ENCODE measurements at regions of chr6 and their contacts with region 1.

Region 1: GRCh38 chr6:26025894-26026832 is 61.1 kb upstream of the HFE start:
- DNase-seq: peak; percentile 97
- ATAC-seq: peak; percentile 35
- H3K4me3 ChIP-seq: peak overlapping the region; percentile 58 to 99 (median 88)
- H3K4me3 Mint-ChIP-seq: peak overlapping the region; percentile 98
- H3K27ac ChIP-seq: peak overlapping the region; percentile 88 to 97
- H3K27ac Mint-ChIP-seq: peak overlapping the region; percentile 98
- H3K4me1 ChIP-seq: peaks cover 23 to 32% of the 10 kb centered on the region in 2 donors
- H3K4me1 Mint-ChIP-seq: peaks cover 49% of the 10 kb centered on the region
- H3K27me3 ChIP-seq: no peaks in the 10 kb centered on the region
- H3K27me3 Mint-ChIP-seq: no peaks in the 10 kb centered on the region
- CTCF ChIP-seq: peak; percentile 92

Region 2: DNA sequence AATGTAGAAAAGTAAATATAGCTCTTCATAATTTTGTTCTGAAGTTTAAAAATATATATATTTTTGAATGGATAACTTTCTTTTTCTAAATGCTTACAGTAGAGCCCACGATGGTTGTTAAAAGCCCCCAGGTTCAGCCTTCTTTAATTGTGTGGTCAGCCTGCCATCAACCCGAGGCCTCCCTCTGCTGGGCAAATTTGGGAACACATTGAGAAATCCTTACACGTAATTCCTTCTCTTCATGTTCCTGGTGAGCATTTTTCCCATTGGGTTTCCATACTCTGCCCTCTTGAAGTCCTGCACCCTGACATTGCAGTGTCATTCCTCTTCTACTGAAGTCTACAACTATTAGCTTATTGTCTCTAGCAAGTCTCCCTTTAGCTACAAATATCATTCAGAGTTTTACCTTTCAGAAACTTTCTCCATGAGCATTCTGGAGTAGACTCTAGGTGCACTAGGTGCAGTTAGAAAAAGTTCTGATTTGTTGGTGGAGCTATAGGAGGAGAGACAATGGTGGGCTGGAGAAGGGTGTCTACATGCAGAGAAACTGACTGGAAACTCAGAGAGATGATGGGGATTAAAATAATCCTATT is 23.0 kb before region 1 on chr6:
- CTCF ChIA-PET with region 1: interaction called, 71 read pairs
- POLR2A ChIA-PET with region 1: interaction called, 3 read pairs
- intact Hi-C with region 1: no loop called
- DNase-seq: peak; percentile 69
- ATAC-seq: peak; percentile 63
- H3K4me3 ChIP-seq: no peak overlapping the region
- H3K4me3 Mint-ChIP-seq: no peak overlapping the region
- H3K27ac ChIP-seq: no peak overlapping the region
- H3K27ac Mint-ChIP-seq: no peak overlapping the region
- H3K4me1 ChIP-seq: no peaks in the 10 kb centered on the region
- H3K4me1 Mint-ChIP-seq: peaks cover 7% of the 10 kb centered on the region
- H3K27me3 ChIP-seq: no peaks in the 10 kb centered on the region
- H3K27me3 Mint-ChIP-seq: no peaks in the 10 kb centered on the region
- CTCF ChIP-seq: peak; percentile 91

Region 3: DNA sequence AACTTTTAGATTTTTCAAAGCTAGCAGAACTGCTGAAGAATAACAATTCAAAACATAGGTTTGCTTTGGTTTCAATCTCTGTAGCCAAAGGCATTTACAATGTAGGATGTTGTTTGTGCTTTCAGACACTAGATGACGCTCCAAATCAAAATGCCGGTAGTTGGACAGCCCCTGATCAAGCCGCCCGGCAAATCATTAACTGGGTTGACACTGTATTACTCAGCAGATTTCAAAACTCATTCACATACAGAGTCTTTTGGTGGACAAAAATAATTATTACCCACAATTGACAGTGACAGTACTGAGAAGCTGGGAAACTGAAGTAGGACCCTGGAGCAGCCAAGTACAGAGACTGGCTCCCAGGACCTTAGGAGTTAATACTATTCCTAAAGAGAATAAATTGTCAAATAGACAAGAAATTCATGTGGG is 39.8 kb after region 1 on chr6:
- CTCF ChIA-PET with region 1: interaction called, 38 read pairs
- POLR2A ChIA-PET with region 1: interaction called, 3 read pairs
- intact Hi-C with region 1: no loop called
- DNase-seq: peak; percentile 83
- ATAC-seq: peak; percentile 88
- H3K4me3 ChIP-seq: no peak overlapping the region
- H3K4me3 Mint-ChIP-seq: no peak overlapping the region
- H3K27ac ChIP-seq: no peak overlapping the region
- H3K27ac Mint-ChIP-seq: no peak overlapping the region
- H3K4me1 ChIP-seq: peaks cover 0 to 4% of the 10 kb centered on the region in 2 donors
- H3K4me1 Mint-ChIP-seq: peaks cover 7% of the 10 kb centered on the region
- H3K27me3 ChIP-seq: peaks cover 0 to 2% (median 0%) of the 10 kb centered on the region in 4 experiments
- H3K27me3 Mint-ChIP-seq: no peaks in the 10 kb centered on the region
- CTCF ChIP-seq: peak; percentile 90

Region 4: GRCh38 chr6:26216356-26216885 is 190.3 kb after region 1 on chr6:
- CTCF ChIA-PET with region 1: no interaction called
- POLR2A ChIA-PET with region 1: interaction called, 11 read pairs
- intact Hi-C with region 1: no loop called
- DNase-seq: peak; percentile 96
- ATAC-seq: peak; percentile 80
- H3K4me3 ChIP-seq: peak overlapping the region; percentile 70 to 93 (median 74)
- H3K4me3 Mint-ChIP-seq: no peak overlapping the region
- H3K27ac ChIP-seq: peak overlapping the region; percentile 81 to 82
- H3K27ac Mint-ChIP-seq: no peak overlapping the region
- H3K4me1 ChIP-seq: peaks cover 15 to 26% of the 10 kb centered on the region in 2 donors
- H3K4me1 Mint-ChIP-seq: peaks cover 19% of the 10 kb centered on the region
- H3K27me3 ChIP-seq: no peaks in the 10 kb centered on the region
- H3K27me3 Mint-ChIP-seq: no peaks in the 10 kb centered on the region
- CTCF ChIP-seq: no peak

Region 5: DNA sequence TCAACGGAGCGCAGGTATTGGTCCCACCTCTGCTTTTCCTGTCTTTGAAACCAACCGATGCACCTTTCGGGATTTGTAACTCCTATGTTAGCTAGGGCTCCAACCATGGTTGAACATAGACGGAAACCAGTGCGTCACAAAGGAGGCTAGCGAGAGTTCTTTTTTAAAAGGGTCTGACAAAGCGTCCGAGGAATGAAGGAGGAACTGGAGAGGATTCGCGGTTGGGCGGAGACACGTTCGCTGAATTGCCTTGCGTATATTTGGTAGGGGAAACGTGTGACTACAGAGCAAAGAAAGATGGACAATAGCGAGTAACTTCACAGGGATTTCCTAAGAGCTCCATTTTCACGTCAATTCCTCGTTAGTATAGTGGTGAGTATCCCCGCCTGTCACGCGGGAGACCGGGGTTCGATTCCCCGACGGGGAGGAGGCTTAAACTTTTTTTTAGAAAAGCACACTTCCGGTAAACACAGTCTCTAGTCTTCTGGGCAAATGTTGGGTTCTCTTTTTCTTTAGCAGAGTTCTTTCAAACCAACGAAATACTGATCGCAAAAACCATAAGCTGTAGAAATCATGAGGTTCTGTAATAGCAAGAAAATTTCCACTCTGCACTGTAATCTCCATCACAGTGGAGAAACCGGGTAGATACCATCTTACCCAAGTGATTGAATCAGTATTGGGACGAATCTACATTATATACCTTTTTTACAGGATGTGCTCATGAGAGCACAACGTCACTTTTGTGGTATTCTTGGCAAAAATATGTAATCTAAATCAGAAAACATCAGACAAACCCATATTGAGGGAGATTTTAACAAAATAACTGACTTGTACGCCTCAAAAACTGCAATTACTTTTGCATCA is 1453.4 kb after region 1 on chr6:
- CTCF ChIA-PET with region 1: no interaction called
- POLR2A ChIA-PET with region 1: no interaction called
- intact Hi-C with region 1: loop called (anchors 5 kb)
- DNase-seq: peak; percentile 96
- ATAC-seq: peak; percentile 77
- H3K4me3 ChIP-seq: peak overlapping the region; percentile 88 to 97 (median 95)
- H3K4me3 Mint-ChIP-seq: no peak overlapping the region
- H3K27ac ChIP-seq: peak overlapping the region; percentile 98
- H3K27ac Mint-ChIP-seq: no peak overlapping the region
- H3K4me1 ChIP-seq: peaks cover 15 to 17% of the 10 kb centered on the region in 2 donors
- H3K4me1 Mint-ChIP-seq: peaks cover 6% of the 10 kb centered on the region
- H3K27me3 ChIP-seq: no peaks in the 10 kb centered on the region
- H3K27me3 Mint-ChIP-seq: no peaks in the 10 kb centered on the region
- CTCF ChIP-seq: no peak

Region 6: DNA sequence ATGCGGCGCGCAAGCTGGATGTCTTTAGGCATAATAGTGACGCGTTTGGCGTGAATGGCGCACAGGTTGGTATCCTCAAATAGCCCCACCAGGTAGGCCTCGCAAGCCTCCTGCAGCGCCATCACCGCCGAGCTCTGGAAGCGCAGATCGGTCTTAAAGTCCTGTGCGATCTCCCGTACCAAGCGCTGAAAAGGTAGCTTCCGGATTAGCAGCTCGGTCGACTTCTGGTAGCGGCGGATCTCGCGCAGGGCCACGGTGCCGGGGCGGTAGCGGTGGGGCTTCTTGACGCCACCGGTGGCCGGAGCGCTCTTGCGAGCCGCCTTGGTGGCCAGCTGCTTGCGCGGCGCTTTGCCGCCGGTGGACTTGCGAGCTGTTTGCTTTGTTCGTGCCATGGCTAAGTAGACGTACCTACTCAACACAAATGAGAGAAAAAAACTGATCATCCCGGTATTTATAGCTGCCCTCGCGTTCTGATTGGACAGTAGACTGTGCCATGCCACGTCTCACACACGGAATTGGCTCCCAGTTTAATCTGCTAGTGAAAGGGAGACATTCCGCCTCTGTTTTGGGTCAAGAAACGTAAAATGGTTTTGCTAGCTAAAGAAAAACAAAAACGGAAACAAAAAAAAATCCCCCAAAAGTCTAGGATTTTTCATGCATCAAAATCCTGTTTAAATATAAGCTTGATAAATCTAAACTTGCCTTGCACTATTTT is 1845.9 kb after region 1 on chr6:
- CTCF ChIA-PET with region 1: interaction called, 3 read pairs
- POLR2A ChIA-PET with region 1: interaction called, 3 read pairs
- intact Hi-C with region 1: loop called (anchors 2 kb)
- DNase-seq: peak; percentile 98
- ATAC-seq: peak; percentile 76
- H3K4me3 ChIP-seq: peak overlapping the region; percentile 66 to 99 (median 76)
- H3K4me3 Mint-ChIP-seq: peak overlapping the region; percentile 84
- H3K27ac ChIP-seq: peak overlapping the region; percentile 79 to 88
- H3K27ac Mint-ChIP-seq: peak overlapping the region; percentile 98
- H3K4me1 ChIP-seq: peaks cover 20 to 34% of the 10 kb centered on the region in 2 donors
- H3K4me1 Mint-ChIP-seq: peaks cover 30% of the 10 kb centered on the region
- H3K27me3 ChIP-seq: no peaks in the 10 kb centered on the region
- H3K27me3 Mint-ChIP-seq: no peaks in the 10 kb centered on the region
- CTCF ChIP-seq: peak; percentile 56